Heart right ventricle (tissue), 16 donors: ENCODE measurements at regions of chr5 and their contacts with region 1.

Region 1: DNA sequence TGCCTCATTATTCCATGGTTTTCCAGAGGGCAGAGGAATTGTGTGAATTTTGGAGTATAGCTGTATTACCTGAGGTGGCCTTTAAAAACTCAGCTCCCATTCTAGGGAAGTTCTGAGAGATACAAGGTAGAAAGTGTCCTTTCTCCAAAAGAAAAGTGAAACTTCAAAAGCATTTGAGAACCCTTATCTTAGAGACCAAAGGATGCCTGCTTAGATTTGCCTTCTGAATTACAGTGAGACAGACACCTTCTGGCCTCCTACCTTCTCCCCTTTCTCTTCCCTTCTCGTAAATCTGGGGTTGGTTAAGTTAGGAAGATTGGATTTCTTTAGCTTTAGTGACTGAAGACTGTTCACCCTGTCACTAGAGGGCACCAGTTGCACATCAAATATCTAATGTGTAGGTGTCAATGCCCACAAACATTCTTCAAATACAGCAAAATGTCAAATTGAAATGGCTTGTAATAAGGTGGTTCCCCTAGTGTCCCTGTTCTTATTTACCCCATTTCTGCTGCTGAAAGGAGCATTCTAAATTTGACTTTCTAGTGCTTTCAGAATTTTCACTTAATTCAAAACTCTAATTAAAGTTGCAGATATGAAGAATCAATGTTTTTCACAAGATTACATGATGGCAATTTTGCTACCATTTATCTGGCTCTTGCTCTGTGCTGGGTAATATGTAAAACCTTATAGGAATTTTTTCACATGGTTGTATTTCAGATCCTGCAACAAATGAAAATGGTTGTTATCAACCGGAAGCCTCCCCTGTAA is 46.7 kb downstream of the PRRC1 start:
- DNase-seq: peak in 1 of 2 donors; percentile 47
- ATAC-seq: peak in 5 of 8 donors; percentile 38 to 72 (median 64)
- H3K4me3 ChIP-seq: no peak overlapping the region
- H3K27ac ChIP-seq: no peak overlapping the region
- H3K4me1 ChIP-seq: peaks cover 0 to 5% (median 0%) of the 10 kb centered on the region in 9 donors
- H3K27me3 ChIP-seq: peaks cover 0 to 6% (median 0%) of the 10 kb centered on the region in 7 donors
- CTCF ChIP-seq: peak; percentile 23 to 79 (median 74)

Region 2: GRCh38 chr5:127723572-127723971 is 159.4 kb after region 1 on chr5:
- intact Hi-C with region 1: loop called in 2 of 10 experiments (anchors 10 kb)
- DNase-seq: no peak
- ATAC-seq: peak in 4 of 8 donors; percentile 38 to 79 (median 49)
- H3K4me3 ChIP-seq: no peak overlapping the region
- H3K27ac ChIP-seq: no peak overlapping the region
- H3K4me1 ChIP-seq: peaks cover 3 to 16% (median 9%) of the 10 kb centered on the region in 9 donors
- H3K27me3 ChIP-seq: no peaks in the 10 kb centered on the region
- CTCF ChIP-seq: no peak

Region 3: DNA sequence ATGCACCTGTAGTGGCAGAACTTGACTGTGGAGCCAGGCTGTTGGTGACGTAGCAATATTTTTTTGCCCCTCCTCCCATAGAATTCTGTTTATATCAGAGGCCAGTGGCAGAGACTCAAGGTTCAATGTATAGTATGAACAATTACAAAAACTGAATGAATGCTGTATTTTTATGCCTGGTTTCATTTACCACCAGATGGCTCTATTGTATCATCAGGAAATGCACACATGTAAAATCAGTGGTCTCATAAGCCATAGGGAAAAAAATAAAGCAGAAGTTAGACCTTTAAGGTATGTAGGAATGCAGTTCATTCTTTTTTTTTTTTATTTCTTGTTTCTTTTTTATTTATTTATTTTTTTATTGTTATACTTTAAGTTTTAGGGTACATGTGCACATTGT is 182.6 kb after region 1 on chr5:
- intact Hi-C with region 1: loop called in 4 of 10 experiments (anchors 10 kb)
- DNase-seq: no peak
- ATAC-seq: no peak
- H3K4me3 ChIP-seq: no peak overlapping the region
- H3K27ac ChIP-seq: no peak overlapping the region
- H3K4me1 ChIP-seq: no peaks in the 10 kb centered on the region
- H3K27me3 ChIP-seq: no peaks in the 10 kb centered on the region
- CTCF ChIP-seq: peak in 8 of 9 donors; percentile 33 to 67 (median 54)

Region 4: DNA sequence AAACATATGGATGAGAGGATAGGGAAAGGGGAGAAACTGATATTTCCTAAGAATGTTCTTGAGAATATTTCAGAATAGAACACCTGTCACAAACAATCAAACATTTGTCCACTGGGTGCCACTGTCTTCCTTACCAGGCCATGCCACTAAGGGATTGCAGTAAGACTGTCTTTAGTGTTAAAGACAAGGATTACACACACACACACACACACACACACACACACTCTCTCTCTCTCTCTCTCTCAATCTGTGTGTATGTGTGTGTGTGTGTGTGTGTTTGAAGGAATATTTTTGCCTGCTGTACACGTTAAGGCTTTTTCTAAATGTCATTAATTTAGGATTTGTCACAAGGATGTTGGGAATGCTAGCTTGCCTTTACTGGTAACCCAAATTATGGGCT is 193.4 kb after region 1 on chr5:
- intact Hi-C with region 1: loop called in 2 of 10 experiments (anchors 10 kb)
- DNase-seq: peak in 1 of 2 donors; percentile 40
- ATAC-seq: peak in 7 of 8 donors; percentile 44 to 84 (median 69)
- H3K4me3 ChIP-seq: no peak overlapping the region
- H3K27ac ChIP-seq: no peak overlapping the region
- H3K4me1 ChIP-seq: peaks cover 0 to 11% (median 6%) of the 10 kb centered on the region in 9 donors
- H3K27me3 ChIP-seq: no peaks in the 10 kb centered on the region
- CTCF ChIP-seq: peak in 8 of 9 donors; percentile 22 to 67 (median 55)

Region 5: GRCh38 chr5:128498844-128499455 is 934.8 kb after region 1 on chr5:
- intact Hi-C with region 1: loop called in 3 of 10 experiments (anchors 5 kb)
- DNase-seq: peak in 1 of 2 donors; percentile 17
- ATAC-seq: peak in 2 of 8 donors; percentile 55 to 66
- H3K4me3 ChIP-seq: no peak overlapping the region
- H3K27ac ChIP-seq: no peak overlapping the region
- H3K4me1 ChIP-seq: peaks cover 0 to 7% (median 0%) of the 10 kb centered on the region in 9 donors
- H3K27me3 ChIP-seq: no peaks in the 10 kb centered on the region
- CTCF ChIP-seq: peak; percentile 18 to 72 (median 56)